ENCODE measurements at regions of chr19 and their contacts with region 1.

Region 1: DNA sequence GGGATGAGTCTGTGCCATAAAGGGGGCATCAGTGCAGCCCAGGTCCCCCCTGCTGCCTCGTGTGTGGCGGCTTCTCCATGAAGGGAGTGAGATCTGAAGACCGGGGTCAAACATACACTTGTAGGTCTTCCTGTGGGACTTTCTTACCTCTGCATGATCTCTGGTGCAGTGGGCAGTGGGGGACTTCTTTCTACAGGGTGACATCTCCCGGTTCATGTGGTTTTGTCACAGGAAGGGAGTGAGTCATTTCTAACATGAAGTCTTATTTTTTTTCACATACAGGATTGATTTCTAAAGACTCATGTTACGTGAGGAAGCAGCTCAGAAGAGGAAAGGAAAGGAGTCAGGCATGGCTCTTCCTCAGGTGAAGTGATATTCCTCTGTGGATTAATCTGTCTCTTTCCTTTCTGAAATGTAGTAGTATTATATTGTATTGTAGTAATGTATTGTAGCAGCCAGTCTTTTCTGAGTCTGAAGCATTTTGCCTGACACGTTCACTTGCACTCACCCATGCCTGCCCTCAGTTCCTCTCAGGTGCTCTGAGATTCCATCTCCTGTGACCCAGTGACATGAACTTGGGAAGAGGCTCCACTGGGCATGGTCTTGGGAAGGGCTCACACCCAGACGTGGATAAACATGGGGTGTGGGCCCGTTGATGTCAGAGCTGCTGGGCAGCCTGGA is 15.7 kb downstream of the ZNF808 start:
- DNase-seq: peak in 23 of 35 experiments; percentile 2 to 68 (median 17)
- ATAC-seq: peak; percentile 64 to 92 (median 76)
- H3K4me3 ChIP-seq: no peak overlapping the region
- H3K4me3 Mint-ChIP-seq: peak overlapping the region; percentile 7 to 33 (median 28)
- H3K27ac ChIP-seq: peak overlapping the region; percentile 55
- H3K27ac Mint-ChIP-seq: peak overlapping the region; percentile 77 to 85
- H3K4me1 ChIP-seq: peaks cover 0 to 24% of the 10 kb centered on the region in 2 experiments
- H3K4me1 Mint-ChIP-seq: peaks cover 22 to 33% (median 27%) of the 10 kb centered on the region in 3 donors
- H3K27me3 ChIP-seq: no peaks in the 10 kb centered on the region
- H3K27me3 Mint-ChIP-seq: no peaks in the 10 kb centered on the region

Region 2: GRCh38 chr19:52409941-52410675 is 133.0 kb before region 1 on chr19:
- CTCF ChIA-PET with region 1: interaction called in 1 of 2 experiments, 14 read pairs
- POLR2A ChIA-PET with region 1: no interaction called
- DNase-seq: no peak
- ATAC-seq: no peak
- H3K4me3 ChIP-seq: peak overlapping the region in 1 of 2 donors; percentile 11
- H3K4me3 Mint-ChIP-seq: no peak overlapping the region
- H3K27ac ChIP-seq: no peak overlapping the region
- H3K27ac Mint-ChIP-seq: no peak overlapping the region
- H3K4me1 ChIP-seq: no peaks in the 10 kb centered on the region
- H3K4me1 Mint-ChIP-seq: no peaks in the 10 kb centered on the region
- H3K27me3 ChIP-seq: no peaks in the 10 kb centered on the region
- H3K27me3 Mint-ChIP-seq: no peaks in the 10 kb centered on the region

Region 3: DNA sequence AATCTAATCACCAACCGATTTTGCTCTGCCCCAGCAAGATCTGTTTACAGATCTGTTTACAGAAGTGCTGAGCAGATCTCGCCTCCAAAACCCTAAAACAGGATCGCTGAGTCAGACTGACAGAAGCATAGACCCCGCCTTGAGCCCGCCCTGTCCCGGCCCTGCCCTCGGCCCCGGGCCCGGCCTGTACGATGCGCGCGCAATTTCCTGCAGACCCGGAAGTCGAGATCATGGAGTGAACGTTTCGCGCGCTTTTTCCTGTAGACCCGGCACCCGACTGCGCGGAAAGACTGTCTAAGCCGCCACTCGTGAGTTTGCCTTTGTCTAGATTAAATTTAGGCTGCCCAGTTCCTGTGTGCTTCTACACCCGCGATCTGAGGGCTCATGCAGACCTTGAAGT is 114.2 kb before region 1 on chr19 and contains the start of gene ZNF534:
- CTCF ChIA-PET with region 1: no interaction called
- POLR2A ChIA-PET with region 1: no interaction called
- DNase-seq: no peak
- ATAC-seq: no peak
- H3K4me3 ChIP-seq: no peak within 1 kb of the TSS
- H3K4me3 Mint-ChIP-seq: no peak within 1 kb of the TSS
- H3K27ac ChIP-seq: no peak within 1 kb of the TSS
- H3K27ac Mint-ChIP-seq: no peak within 1 kb of the TSS
- H3K4me1 ChIP-seq: no peaks in the 10 kb centered on the region
- H3K4me1 Mint-ChIP-seq: no peaks in the 10 kb centered on the region
- H3K27me3 ChIP-seq: no peaks in the 10 kb centered on the region
- H3K27me3 Mint-ChIP-seq: no peaks in the 10 kb centered on the region
- total RNA-seq, gene ZNF534: 0.42 TPM in 1 of 5 donors, not detected in the others

Region 4: GRCh38 chr19:52590728-52591127 is 47.6 kb after region 1 on chr19:
- CTCF ChIA-PET with region 1: no interaction called
- POLR2A ChIA-PET with region 1: no interaction called
- DNase-seq: peak in 2 of 35 experiments; percentile 2 to 17
- ATAC-seq: no peak
- H3K4me3 ChIP-seq: no peak overlapping the region
- H3K4me3 Mint-ChIP-seq: no peak overlapping the region
- H3K27ac ChIP-seq: no peak overlapping the region
- H3K27ac Mint-ChIP-seq: no peak overlapping the region
- H3K4me1 ChIP-seq: no peaks in the 10 kb centered on the region
- H3K4me1 Mint-ChIP-seq: peaks cover 0 to 3% (median 0%) of the 10 kb centered on the region in 3 donors
- H3K27me3 ChIP-seq: no peaks in the 10 kb centered on the region
- H3K27me3 Mint-ChIP-seq: no peaks in the 10 kb centered on the region

Measured in T-cell (primary cell).